ENCODE measurements at regions of chr3 and their contacts with region 1.

Region 1: GRCh38 chr3:32018757-32019564 is 37.4 kb downstream of the ZNF860 start:
- DNase-seq: peak in 1 of 2 experiments; percentile 43
- H3K4me3 ChIP-seq: no peak overlapping the region
- H3K4me3 Mint-ChIP-seq: peak overlapping the region; percentile 6
- H3K27ac Mint-ChIP-seq: peak overlapping the region; percentile 20
- H3K4me1 ChIP-seq: peaks cover 6% of the 10 kb centered on the region; the same call in 1 of the 2 replicates
- H3K4me1 Mint-ChIP-seq: peaks cover 11% of the 10 kb centered on the region
- H3K27me3 ChIP-seq: no peaks in the 10 kb centered on the region
- H3K27me3 Mint-ChIP-seq: no peaks in the 10 kb centered on the region
- CTCF ChIP-seq: peak; percentile 60 to 66

Region 2: DNA sequence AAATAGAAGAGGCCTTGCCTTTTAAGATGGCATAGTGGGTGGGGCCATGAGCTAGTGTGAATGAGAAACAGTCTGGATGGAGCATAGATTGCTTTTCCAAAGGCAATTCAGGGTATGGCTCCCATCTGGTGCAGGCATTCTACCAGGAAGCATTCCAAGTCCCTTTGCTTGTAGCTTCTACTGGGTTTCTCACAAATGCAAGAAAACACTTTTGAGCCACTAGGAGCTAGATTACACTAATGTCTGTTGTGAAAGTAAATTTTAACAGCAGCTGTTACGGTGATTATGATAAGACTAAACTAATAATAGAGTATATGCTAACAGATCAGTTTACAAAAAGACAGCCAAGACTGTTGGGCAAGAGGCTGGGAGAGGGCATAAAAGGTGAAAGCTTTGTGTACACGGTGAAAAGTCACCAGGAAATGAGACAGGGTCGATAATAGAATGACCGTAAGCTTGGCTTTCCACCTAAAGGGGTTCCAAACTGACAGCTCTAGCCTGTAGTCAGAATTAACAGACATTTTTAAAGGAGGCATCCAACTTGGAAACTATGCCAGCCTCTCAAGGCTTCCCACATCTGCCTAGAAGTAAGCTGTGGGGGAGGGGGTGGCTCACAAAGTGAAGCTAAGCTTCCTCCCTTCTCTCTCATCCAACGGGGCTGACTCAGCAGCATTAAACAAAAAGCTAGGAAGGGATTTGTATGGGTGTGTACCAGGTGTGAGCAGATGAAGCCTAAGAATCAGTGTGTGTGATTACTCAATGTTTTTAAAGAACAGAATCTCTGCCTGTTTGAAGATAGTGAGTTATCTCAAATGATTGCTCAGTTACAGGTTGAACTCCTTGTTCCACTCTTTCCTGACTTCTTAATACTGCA is 26.4 kb after region 1 on chr3:
- CTCF ChIA-PET with region 1: no interaction called
- POLR2A ChIA-PET with region 1: no interaction called
- intact Hi-C with region 1: no loop called
- DNase-seq: peak; percentile 64
- H3K4me3 ChIP-seq: no peak overlapping the region
- H3K4me3 Mint-ChIP-seq: peak overlapping the region; percentile 49
- H3K27ac Mint-ChIP-seq: peak overlapping the region; percentile 58
- H3K4me1 ChIP-seq: peaks cover 22% of the 10 kb centered on the region
- H3K4me1 Mint-ChIP-seq: peaks cover 17% of the 10 kb centered on the region
- H3K27me3 ChIP-seq: no peaks in the 10 kb centered on the region
- H3K27me3 Mint-ChIP-seq: no peaks in the 10 kb centered on the region
- CTCF ChIP-seq: no peak

Region 3: GRCh38 chr3:32082721-32083120 is 63.8 kb after region 1 on chr3:
- CTCF ChIA-PET with region 1: no interaction called
- POLR2A ChIA-PET with region 1: no interaction called
- intact Hi-C with region 1: loop called (anchors 2 kb)
- DNase-seq: no peak
- H3K4me3 ChIP-seq: no peak overlapping the region
- H3K4me3 Mint-ChIP-seq: peak overlapping the region; percentile 15
- H3K27ac Mint-ChIP-seq: no peak overlapping the region
- H3K4me1 ChIP-seq: peaks cover 17% of the 10 kb centered on the region
- H3K4me1 Mint-ChIP-seq: peaks cover 18% of the 10 kb centered on the region
- H3K27me3 ChIP-seq: no peaks in the 10 kb centered on the region
- H3K27me3 Mint-ChIP-seq: no peaks in the 10 kb centered on the region
- CTCF ChIP-seq: no peak

Region 4: DNA sequence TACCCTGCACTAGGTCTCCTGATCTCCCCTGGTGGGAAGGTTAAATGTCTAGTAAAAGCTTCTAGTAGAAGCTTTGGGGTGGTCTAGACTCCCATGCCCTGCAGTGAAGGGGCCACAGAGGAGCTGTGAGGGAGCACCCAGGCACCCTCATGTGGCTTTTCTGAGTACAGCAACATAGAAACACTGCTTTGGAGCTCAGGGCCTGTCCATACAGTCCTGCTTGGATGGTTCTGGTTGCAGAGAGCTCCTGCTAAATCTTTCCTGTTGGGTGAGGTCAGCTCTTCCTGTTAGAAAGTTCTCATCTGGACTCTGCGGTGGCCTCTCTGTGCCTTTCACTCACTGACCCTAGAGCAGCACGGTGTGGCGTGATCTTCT is 135.2 kb after region 1 on chr3:
- CTCF ChIA-PET with region 1: interaction called, 20 read pairs
- POLR2A ChIA-PET with region 1: interaction called, 3 read pairs
- intact Hi-C with region 1: no loop called
- DNase-seq: peak in 1 of 2 experiments; percentile 40
- H3K4me3 ChIP-seq: no peak overlapping the region
- H3K4me3 Mint-ChIP-seq: no peak overlapping the region
- H3K27ac Mint-ChIP-seq: no peak overlapping the region
- H3K4me1 ChIP-seq: peaks cover 1% of the 10 kb centered on the region
- H3K4me1 Mint-ChIP-seq: no peaks in the 10 kb centered on the region
- H3K27me3 ChIP-seq: no peaks in the 10 kb centered on the region
- H3K27me3 Mint-ChIP-seq: no peaks in the 10 kb centered on the region
- CTCF ChIP-seq: peak; percentile 49 to 52